ENCODE measurements at regions of chr2 and their contacts with region 1.

Region 1: GRCh38 chr2:19362755-19363473 is 4.5 kb upstream of the OSR1 start:
- DNase-seq: peak; percentile 72
- CTCF ChIP-seq: peak; percentile 56

Region 2: DNA sequence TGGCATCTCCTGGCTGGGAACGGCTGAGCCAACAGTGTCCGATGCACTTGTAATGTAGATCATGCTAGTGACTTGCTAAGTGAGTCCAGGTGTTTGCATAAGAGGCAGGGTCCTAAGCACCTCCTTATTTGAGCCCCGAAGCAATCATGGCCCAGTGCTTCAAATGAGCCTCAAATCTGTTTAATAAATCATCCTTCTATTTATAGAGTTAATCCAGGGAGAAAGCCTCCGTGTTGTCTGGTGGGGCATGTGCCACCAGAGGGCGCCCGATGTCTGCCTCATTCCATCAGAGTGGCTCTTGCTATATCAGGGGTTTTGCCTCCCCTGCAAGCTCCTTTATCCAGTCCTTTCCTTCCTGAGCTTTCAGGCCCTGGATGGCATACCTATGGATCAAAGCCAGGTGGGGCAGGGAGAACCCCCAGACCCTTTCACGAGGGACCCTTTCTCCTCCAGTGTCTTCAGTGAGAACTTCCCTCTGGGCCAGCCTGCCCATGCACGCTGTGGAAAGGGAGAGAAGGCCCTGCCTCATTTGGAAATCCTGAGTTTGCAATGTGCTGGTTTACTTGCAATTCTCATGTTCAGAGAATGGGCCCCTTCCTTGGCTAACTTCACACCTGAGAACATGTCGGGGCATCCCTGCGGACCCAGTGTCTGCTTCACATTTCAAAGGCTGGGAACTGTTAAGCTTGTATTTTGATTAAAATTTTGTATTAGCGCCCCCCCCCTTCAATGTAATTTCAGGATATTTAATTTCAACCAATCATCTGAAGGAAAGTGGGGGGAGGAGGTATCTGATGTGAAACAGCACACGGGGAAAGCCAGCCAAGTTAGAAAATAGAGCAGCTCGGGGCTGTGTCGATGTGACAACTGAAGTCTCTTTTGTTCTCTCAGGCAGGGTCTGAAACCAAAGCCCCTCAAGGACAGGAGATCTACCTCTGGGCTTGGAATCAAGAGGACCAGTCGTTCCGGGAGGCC is 842.2 kb before region 1 on chr2:
- in situ Hi-C with region 1: loop called (anchors 25 kb)
- DNase-seq: peak; percentile 62
- CTCF ChIP-seq: peak; percentile 81

Region 3: GRCh38 chr2:18749912-18750526 is 612.9 kb before region 1 on chr2:
- in situ Hi-C with region 1: loop called (anchors 25 kb)
- DNase-seq: peak; percentile 26
- CTCF ChIP-seq: peak; percentile 56

Region 4: GRCh38 chr2:19287324-19287723 is 75.6 kb before region 1 on chr2:
- in situ Hi-C with region 1: no loop called
- DNase-seq: no peak
- CTCF ChIP-seq: no peak

Measured in GM13976 (cell line).